IMR-90 (cell line): ENCODE measurements at regions of chr5 and their contacts with region 1.

Region 1: DNA sequence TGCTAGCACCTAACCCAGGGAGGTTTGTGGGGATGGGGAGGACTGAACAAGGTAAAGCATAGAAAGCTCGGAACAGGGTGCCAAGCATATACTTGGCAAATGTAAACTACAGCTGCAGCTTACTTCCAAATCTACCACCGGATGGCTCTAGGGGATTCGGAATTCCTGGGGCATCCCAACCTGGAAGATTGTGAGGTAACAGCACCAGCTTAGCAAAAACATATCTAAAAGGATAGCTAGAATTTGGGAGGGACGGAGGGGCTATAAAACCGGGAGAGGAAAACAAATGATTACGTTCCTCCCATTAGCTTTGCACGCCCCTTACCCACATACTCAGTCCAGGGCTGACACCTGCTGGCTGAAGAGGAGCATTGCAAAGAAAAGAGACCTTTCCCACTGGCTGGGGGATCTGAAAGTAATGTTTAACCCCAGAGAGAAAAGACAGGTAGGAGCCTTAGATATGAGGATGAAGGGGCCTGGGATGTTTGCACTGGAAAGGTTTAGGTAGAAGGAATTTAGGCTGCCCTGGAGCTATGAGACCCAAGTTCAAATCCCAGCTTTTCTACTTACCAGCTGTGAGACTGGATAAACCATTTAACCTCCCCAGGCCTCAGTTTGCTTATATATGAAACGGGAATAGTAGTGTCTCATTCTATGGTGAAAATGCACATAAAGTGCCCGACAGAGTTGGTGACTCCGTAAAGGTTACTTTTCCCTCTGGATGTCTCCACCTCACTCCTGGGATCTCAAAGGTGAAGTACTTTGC is 73.6 kb downstream of the FAM114A2 start:
- DNase-seq: peak; percentile 41
- ATAC-seq: peak; percentile 97
- H3K4me3 ChIP-seq: no peak overlapping the region
- H3K27ac ChIP-seq: no peak overlapping the region
- H3K4me1 ChIP-seq: peaks cover 8% of the 10 kb centered on the region
- H3K27me3 ChIP-seq: no peaks in the 10 kb centered on the region; the same call in 1 of the 2 replicates
- CTCF ChIP-seq: peak; percentile 95
- POLR2A ChIP-seq: peak; percentile 57
- RAD21 ChIP-seq: peak; percentile 99

Region 2: GRCh38 chr5:152142840-152143469 is 1822.1 kb before region 1 on chr5:
- CTCF ChIA-PET with region 1: no interaction called
- POLR2A ChIA-PET with region 1: no interaction called
- dilution Hi-C with region 1: no loop called
- in situ Hi-C with region 1: no loop called
- intact Hi-C with region 1: loop called (anchors 10 kb)
- DNase-seq: peak; percentile 50
- ATAC-seq: peak; percentile 94
- H3K4me3 ChIP-seq: no peak overlapping the region
- H3K27ac ChIP-seq: no peak overlapping the region
- H3K4me1 ChIP-seq: no peaks in the 10 kb centered on the region
- H3K27me3 ChIP-seq: no peaks in the 10 kb centered on the region
- CTCF ChIP-seq: peak; percentile 70
- POLR2A ChIP-seq: no peak
- RAD21 ChIP-seq: peak; percentile 67

Region 3: GRCh38 chr5:152532714-152533113 is 1432.3 kb before region 1 on chr5:
- CTCF ChIA-PET with region 1: interaction called, 19 read pairs
- POLR2A ChIA-PET with region 1: no interaction called
- dilution Hi-C with region 1: no loop called
- in situ Hi-C with region 1: loop called (anchors 5 kb)
- intact Hi-C with region 1: loop called (anchors 1 kb)
- DNase-seq: peak; percentile 56
- ATAC-seq: peak; percentile 69
- H3K4me3 ChIP-seq: no peak overlapping the region
- H3K27ac ChIP-seq: no peak overlapping the region
- H3K4me1 ChIP-seq: no peaks in the 10 kb centered on the region
- H3K27me3 ChIP-seq: no peaks in the 10 kb centered on the region
- CTCF ChIP-seq: peak; percentile 65
- POLR2A ChIP-seq: no peak
- RAD21 ChIP-seq: peak; percentile 78

Region 4: DNA sequence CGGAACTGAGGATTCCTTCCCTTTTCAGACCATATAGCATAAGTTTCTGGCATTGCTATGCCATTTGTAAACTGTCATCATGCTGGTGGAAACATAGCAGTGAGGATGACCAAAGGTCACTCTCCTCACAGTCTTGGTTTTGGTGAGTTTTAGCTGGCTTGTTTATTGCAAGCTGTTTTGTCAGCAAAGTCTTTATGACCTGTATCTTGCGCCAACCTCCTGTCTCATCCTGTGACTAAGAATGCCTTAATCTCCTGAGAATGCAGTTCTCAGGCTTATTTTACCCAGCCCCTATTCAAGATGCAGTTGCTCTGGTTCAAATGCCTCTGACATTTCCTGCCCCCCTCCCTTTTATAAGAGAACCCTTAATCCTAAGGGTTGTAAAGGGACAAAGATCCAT is 501.3 kb before region 1 on chr5:
- CTCF ChIA-PET with region 1: no interaction called
- POLR2A ChIA-PET with region 1: no interaction called
- dilution Hi-C with region 1: no loop called
- in situ Hi-C with region 1: no loop called
- intact Hi-C with region 1: no loop called
- DNase-seq: peak; percentile 68
- ATAC-seq: peak; percentile 90
- H3K4me3 ChIP-seq: no peak overlapping the region
- H3K27ac ChIP-seq: no peak overlapping the region
- H3K4me1 ChIP-seq: no peaks in the 10 kb centered on the region
- H3K27me3 ChIP-seq: no peaks in the 10 kb centered on the region
- CTCF ChIP-seq: no peak
- POLR2A ChIP-seq: no peak
- RAD21 ChIP-seq: no peak

Region 5: GRCh38 chr5:153496835-153497234 is 468.2 kb before region 1 on chr5:
- CTCF ChIA-PET with region 1: interaction called, 27 read pairs
- POLR2A ChIA-PET with region 1: no interaction called
- dilution Hi-C with region 1: no loop called
- in situ Hi-C with region 1: no loop called
- intact Hi-C with region 1: loop called (anchors 1 kb)
- DNase-seq: peak; percentile 57
- ATAC-seq: peak; percentile 86
- H3K4me3 ChIP-seq: no peak overlapping the region
- H3K27ac ChIP-seq: no peak overlapping the region
- H3K4me1 ChIP-seq: no peaks in the 10 kb centered on the region; the same call in none of the 2 replicates
- H3K27me3 ChIP-seq: no peaks in the 10 kb centered on the region; the same call in 1 of the 2 replicates
- CTCF ChIP-seq: peak; percentile 93
- POLR2A ChIP-seq: peak; percentile 54
- RAD21 ChIP-seq: peak; percentile 96

Region 6: GRCh38 chr5:153827397-153827796 is 137.7 kb before region 1 on chr5:
- CTCF ChIA-PET with region 1: interaction called, 10 read pairs
- POLR2A ChIA-PET with region 1: no interaction called
- dilution Hi-C with region 1: no loop called
- in situ Hi-C with region 1: no loop called
- intact Hi-C with region 1: loop called (anchors 1 kb)
- DNase-seq: no peak
- ATAC-seq: peak; percentile 49
- H3K4me3 ChIP-seq: no peak overlapping the region
- H3K27ac ChIP-seq: no peak overlapping the region
- H3K4me1 ChIP-seq: no peaks in the 10 kb centered on the region
- H3K27me3 ChIP-seq: no peaks in the 10 kb centered on the region
- CTCF ChIP-seq: peak; percentile 31; the same call in 1 of the 2 replicates
- POLR2A ChIP-seq: no peak
- RAD21 ChIP-seq: peak; percentile 25